ENCODE measurements at regions of chr12 and their contacts with region 1.

Region 1: GRCh38 chr12:7018350-7019042 is at the start of gene LPCAT3:
- DNase-seq: peak; percentile 100
- H3K4me3 Mint-ChIP-seq: peak within 1 kb of the TSS; percentile 90
- H3K27ac Mint-ChIP-seq: peak within 1 kb of the TSS; percentile 91
- H3K4me1 Mint-ChIP-seq: peaks cover 28% of the 10 kb centered on the region
- H3K27me3 Mint-ChIP-seq: no peaks in the 10 kb centered on the region
- total RNA-seq, gene LPCAT3: 29.2 and 29.5 TPM in 2 replicates

Region 2: DNA sequence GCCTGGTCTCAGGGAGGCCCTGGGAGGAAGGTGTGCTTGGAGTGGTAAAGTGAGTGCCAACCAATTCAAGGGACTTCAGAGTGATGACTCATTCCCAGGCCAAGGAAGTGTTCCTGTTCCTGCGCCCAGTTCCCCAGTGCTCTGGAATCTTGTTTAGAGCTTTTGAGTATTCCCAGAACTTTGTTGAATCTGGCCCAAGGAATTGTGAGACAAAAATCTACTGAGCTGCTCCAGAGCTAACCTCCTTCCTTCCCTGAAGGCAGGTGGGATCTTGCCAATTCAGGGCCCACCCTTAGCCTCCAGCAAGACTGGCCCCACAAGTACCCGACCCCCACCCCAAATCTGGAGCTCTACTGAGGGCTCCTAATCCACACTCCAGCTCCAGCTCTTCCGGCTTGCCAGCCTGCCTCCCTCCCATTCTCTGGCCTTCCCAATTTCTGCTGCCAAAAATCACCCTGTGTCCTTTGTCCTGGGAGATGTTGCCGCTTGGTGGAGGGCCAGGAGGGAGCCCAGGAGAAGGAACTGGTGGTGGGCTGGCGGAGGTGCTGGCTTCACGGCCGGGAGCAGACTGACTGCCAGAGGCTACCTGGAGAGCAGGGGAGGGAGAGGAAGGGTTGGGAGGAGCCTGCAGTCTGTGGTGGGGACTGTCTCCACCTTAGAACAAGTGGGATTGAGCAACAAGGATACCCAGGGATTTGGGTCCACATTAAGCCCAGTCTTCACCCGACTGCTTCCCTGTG is 92.8 kb before region 1 on chr12:
- intact Hi-C with region 1: loop called (anchors 5 kb)
- DNase-seq: no peak
- H3K4me3 Mint-ChIP-seq: peak overlapping the region; percentile 97
- H3K27ac Mint-ChIP-seq: peak overlapping the region; percentile 59
- H3K4me1 Mint-ChIP-seq: peaks cover 52% of the 10 kb centered on the region
- H3K27me3 Mint-ChIP-seq: no peaks in the 10 kb centered on the region

Region 3: DNA sequence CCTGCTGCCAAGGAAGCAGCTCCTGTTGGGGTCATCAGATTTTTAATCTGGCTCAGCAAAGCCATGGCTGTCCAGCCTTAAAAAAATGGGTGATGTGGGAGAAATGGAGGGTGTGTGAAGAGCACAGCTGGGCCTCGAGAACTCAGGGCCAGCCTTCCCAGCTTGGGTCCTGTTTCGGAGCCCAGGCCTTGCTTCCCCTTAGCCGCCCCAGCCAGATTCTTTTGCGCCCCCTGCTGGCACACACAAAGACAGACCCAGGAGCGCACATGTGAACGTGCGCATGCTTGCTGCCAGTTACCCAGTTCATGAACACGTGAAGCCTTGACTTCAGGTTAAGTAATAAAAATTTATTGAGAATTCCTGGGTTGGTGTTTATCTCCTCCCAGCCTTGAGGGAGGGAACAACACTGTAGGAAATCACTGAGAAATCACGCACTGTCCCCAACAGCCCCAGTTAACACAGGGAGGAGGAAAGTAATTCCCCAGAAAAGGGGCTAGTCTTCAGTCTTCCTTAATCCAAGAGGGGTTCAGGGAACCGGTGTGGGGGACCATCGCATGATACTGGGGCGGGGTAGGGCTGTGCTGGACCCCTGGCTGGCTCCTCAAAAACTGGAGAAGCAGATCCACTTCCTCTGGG is 53.4 kb before region 1 on chr12:
- intact Hi-C with region 1: loop called (anchors 1 kb)
- DNase-seq: peak; percentile 96
- H3K4me3 Mint-ChIP-seq: peak overlapping the region; percentile 28
- H3K27ac Mint-ChIP-seq: peak overlapping the region; percentile 94
- H3K4me1 Mint-ChIP-seq: peaks cover 50% of the 10 kb centered on the region
- H3K27me3 Mint-ChIP-seq: no peaks in the 10 kb centered on the region

Region 4: GRCh38 chr12:7108796-7109571 is 90.5 kb after region 1 on chr12 and contains the start of gene C1RL:
- intact Hi-C with region 1: loop called (anchors 1 kb)
- DNase-seq: peak; percentile 96
- H3K4me3 Mint-ChIP-seq: peak within 1 kb of the TSS; percentile 95
- H3K27ac Mint-ChIP-seq: peak within 1 kb of the TSS; percentile 92
- H3K4me1 Mint-ChIP-seq: peaks cover 42% of the 10 kb centered on the region
- H3K27me3 Mint-ChIP-seq: no peaks in the 10 kb centered on the region
- total RNA-seq, gene C1RL: 19.8 and 23.0 TPM in 2 replicates

Region 5: GRCh38 chr12:7188562-7189397 is 170.3 kb after region 1 on chr12:
- intact Hi-C with region 1: loop called (anchors 5 kb)
- DNase-seq: peak; percentile 89
- H3K4me3 Mint-ChIP-seq: peak overlapping the region; percentile 93
- H3K27ac Mint-ChIP-seq: peak overlapping the region; percentile 96
- H3K4me1 Mint-ChIP-seq: peaks cover 22% of the 10 kb centered on the region
- H3K27me3 Mint-ChIP-seq: no peaks in the 10 kb centered on the region

Measured in activated CD4-positive, alpha-beta T cell treated with anti-CD3 and anti-CD28 coated beads, Interleukin-2, amount 10 ng/mL, durations not matched to agents 24 days and 14 days (primary cell).